Motor neuron (in vitro differentiated cells): ENCODE measurements at regions of chr9 and their contacts with region 1.

Region 1: GRCh38 chr9:69078581-69078980 is 43.0 kb downstream of the FXN start:
- ATAC-seq: peak in 2 of 8 experiments; percentile 30 to 84
- H3K4me3 ChIP-seq: no peak overlapping the region
- H3K27ac ChIP-seq: no peak overlapping the region
- H3K4me1 ChIP-seq: no peaks in the 10 kb centered on the region

Region 2: GRCh38 chr9:68802525-68803015 is 276.0 kb before region 1 on chr9:
- in situ Hi-C with region 1: no loop called
- ATAC-seq: no peak
- H3K4me3 ChIP-seq: no peak overlapping the region
- H3K27ac ChIP-seq: no peak overlapping the region
- H3K4me1 ChIP-seq: peaks cover 7 to 20% of the 10 kb centered on the region in 2 donors

Region 3: DNA sequence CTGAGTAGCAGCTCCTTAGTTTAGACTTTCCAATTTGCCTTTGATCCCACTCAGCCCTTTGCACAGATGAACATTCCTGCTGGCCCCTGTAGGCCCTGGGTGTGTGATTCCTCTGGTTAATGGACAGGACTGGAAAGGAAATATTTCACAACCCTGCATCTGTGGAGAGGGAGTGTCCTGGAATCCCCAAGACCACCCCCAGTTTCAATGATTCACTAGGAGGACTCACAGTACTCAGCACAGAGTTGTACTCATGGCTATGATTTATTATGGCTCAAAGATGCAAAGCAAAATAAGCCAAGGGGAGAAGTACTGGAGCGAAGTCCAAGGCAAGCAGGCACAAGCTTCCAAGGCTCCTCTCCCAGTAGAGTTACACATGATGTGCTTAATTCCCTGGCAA is 53.1 kb after region 1 on chr9:
- in situ Hi-C with region 1: loop called in 1 of 9 experiments (anchors 10 kb)
- ATAC-seq: peak; percentile 23 to 94 (median 76)
- H3K4me3 ChIP-seq: no peak overlapping the region
- H3K27ac ChIP-seq: no peak overlapping the region
- H3K4me1 ChIP-seq: no peaks in the 10 kb centered on the region